OCI-LY7 (cell line): ENCODE measurements at regions of chr9 and their contacts with region 1.

Region 1: DNA sequence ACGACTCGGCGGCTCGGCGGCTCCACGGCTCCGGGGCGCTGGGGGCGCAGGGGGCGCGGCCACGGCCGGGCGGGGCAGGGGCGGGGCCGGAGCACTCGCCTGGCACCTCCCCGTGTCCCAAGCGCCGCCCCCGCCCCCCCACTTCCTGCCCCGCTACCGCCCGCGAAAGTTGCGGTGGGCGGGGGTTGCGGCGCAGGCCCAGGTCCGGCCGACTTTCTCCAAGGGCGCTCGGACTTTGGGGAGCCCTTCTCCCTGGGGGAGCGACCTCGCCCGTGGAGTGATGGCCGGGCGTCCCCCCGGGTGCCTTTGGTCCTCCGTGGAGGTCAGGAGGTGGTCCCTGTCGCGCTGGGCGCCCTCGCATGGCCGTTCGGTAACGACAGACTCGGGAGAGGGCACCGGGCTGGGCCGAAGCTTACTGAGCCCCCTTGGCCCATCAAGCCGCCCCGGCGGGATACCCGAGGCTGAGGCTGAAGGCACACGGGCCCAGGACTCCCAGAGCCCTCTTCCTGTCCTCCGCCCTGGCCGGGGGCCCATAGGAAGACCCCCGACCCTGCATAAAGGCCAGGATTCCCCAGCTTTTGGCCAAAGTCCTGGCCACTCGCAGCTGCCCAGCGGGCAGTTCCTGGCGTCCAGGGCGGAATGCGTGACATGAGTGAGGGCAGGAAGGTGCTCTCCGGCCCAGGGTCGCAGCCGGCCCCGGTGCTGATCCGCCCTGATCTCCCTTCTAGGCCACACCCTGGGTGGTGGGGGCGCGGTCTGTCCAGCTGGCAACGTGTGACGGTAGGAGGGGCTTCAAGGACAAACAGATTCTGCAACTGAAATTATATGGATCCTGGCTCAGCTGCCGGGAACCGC is 883 bp upstream of the VAV2 start:
- DNase-seq: peak; percentile 78
- H3K4me3 ChIP-seq: peak overlapping the region; percentile 88
- H3K27ac ChIP-seq: peak overlapping the region; percentile 16
- H3K4me1 ChIP-seq: peaks cover 25% of the 10 kb centered on the region
- CTCF ChIP-seq: peak; percentile 76

Region 2: GRCh38 chr9:133782157-133783130 is 210.6 kb before region 1 on chr9:
- CTCF ChIA-PET with region 1: interaction called, 5 read pairs
- POLR2A ChIA-PET with region 1: no interaction called
- intact Hi-C with region 1: loop called (anchors 1 kb)
- DNase-seq: peak; percentile 81
- H3K4me3 ChIP-seq: no peak overlapping the region
- H3K27ac ChIP-seq: peak overlapping the region; percentile 27
- H3K4me1 ChIP-seq: peaks cover 33% of the 10 kb centered on the region
- CTCF ChIP-seq: peak; percentile 93

Region 3: GRCh38 chr9:133876144-133876543 is 116.9 kb before region 1 on chr9:
- CTCF ChIA-PET with region 1: no interaction called
- POLR2A ChIA-PET with region 1: no interaction called
- intact Hi-C with region 1: loop called (anchors 5 kb)
- DNase-seq: no peak
- H3K4me3 ChIP-seq: no peak overlapping the region
- H3K27ac ChIP-seq: no peak overlapping the region
- H3K4me1 ChIP-seq: no peaks in the 10 kb centered on the region
- CTCF ChIP-seq: peak; percentile 47; the same call in 1 of the 2 replicates

Region 4: DNA sequence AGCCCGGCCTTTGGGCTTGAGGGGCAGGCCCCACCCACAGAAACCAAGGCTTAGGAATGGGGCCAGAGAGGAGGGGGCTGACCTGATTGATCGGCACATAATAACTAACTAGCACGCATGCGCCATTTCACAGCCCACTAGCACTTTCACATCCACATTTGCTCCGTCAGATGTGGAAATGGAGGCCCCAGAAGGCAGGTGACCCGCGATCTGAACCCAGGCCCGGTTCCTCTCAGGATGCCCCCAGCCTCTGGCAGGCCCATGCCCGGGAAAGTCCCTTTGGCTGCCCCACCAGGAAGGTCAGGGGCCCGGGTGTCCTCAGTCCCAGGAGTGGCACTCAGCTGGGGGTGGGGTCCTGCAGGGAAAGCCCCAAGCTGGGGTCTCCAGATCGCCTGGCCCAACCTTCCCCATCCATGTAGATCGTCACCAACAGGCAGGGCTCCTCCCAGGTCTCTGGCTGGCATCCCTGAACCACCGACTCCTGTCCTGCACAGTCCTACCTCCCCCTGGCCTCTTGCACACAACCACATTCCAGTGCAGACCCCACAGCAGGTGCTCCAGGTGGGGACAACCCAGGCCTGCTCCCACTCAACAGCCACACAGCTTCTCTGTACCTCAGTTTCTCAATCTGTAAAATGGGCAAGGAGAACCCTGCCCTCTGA is 47.6 kb before region 1 on chr9:
- CTCF ChIA-PET with region 1: no interaction called
- POLR2A ChIA-PET with region 1: interaction called, 3 read pairs
- intact Hi-C with region 1: loop called (anchors 2 kb)
- DNase-seq: peak; percentile 82
- H3K4me3 ChIP-seq: peak overlapping the region; percentile 38
- H3K27ac ChIP-seq: peak overlapping the region; percentile 89
- H3K4me1 ChIP-seq: peaks cover 51% of the 10 kb centered on the region
- CTCF ChIP-seq: no peak

Region 5: GRCh38 chr9:134040781-134041648 is 48.0 kb after region 1 on chr9:
- CTCF ChIA-PET with region 1: no interaction called
- POLR2A ChIA-PET with region 1: no interaction called
- intact Hi-C with region 1: no loop called
- DNase-seq: no peak
- H3K4me3 ChIP-seq: no peak overlapping the region
- H3K27ac ChIP-seq: no peak overlapping the region
- H3K4me1 ChIP-seq: no peaks in the 10 kb centered on the region
- CTCF ChIP-seq: no peak